Lower leg skin (tissue), 4 donors: ENCODE measurements at regions of chr18 and their contacts with region 1.

Region 1: GRCh38 chr18:73168236-73168635 is 300.4 kb upstream of the NETO1 start:
- DNase-seq: no peak
- H3K4me3 ChIP-seq: no peak overlapping the region
- CTCF ChIP-seq: no peak
- POLR2A ChIP-seq: no peak

Region 2: GRCh38 chr18:73136134-73136533 is 32.1 kb before region 1 on chr18:
- intact Hi-C with region 1: no loop called
- DNase-seq: no peak
- H3K4me3 ChIP-seq: no peak overlapping the region
- CTCF ChIP-seq: no peak
- POLR2A ChIP-seq: no peak

Region 3: DNA sequence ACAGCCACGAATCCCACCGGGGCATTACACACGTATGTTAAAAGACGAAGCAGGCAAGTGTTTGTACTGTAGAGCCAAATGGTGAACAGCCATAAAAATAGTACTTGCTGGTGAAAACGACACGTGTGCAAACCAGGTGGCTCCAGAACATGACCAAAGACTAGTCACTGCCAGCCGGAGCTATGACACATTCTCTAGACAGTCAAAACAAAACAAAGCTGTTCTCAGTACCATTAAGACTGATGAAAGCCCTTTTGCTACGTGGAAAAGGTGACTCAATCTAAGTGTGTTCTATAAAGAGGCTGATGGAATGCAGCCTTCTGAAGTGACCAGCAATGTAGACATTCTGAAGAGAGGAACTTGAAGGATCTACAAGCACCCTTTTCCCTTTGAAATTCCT is 67.3 kb after region 1 on chr18:
- intact Hi-C with region 1: loop called (anchors 2 kb)
- DNase-seq: no peak
- H3K4me3 ChIP-seq: no peak overlapping the region
- CTCF ChIP-seq: no peak
- POLR2A ChIP-seq: no peak